Mammary epithelial cell (primary cell): ENCODE measurements at regions of chr9 and their contacts with region 1.

Region 1: GRCh38 chr9:27529316-27530278 is at the start of gene MOB3B:
- DNase-seq: peak; percentile 71
- H3K4me3 ChIP-seq: peak within 1 kb of the TSS; percentile 68 to 91 (median 71)
- H3K27ac ChIP-seq: peak within 1 kb of the TSS; percentile 98
- H3K4me1 ChIP-seq: peaks cover 31% of the 10 kb centered on the region
- H3K27me3 ChIP-seq: no peaks in the 10 kb centered on the region
- CTCF ChIP-seq: peak; percentile 52 to 86
- total RNA-seq, gene MOB3B: 18.8 to 19.3 TPM

Region 2: DNA sequence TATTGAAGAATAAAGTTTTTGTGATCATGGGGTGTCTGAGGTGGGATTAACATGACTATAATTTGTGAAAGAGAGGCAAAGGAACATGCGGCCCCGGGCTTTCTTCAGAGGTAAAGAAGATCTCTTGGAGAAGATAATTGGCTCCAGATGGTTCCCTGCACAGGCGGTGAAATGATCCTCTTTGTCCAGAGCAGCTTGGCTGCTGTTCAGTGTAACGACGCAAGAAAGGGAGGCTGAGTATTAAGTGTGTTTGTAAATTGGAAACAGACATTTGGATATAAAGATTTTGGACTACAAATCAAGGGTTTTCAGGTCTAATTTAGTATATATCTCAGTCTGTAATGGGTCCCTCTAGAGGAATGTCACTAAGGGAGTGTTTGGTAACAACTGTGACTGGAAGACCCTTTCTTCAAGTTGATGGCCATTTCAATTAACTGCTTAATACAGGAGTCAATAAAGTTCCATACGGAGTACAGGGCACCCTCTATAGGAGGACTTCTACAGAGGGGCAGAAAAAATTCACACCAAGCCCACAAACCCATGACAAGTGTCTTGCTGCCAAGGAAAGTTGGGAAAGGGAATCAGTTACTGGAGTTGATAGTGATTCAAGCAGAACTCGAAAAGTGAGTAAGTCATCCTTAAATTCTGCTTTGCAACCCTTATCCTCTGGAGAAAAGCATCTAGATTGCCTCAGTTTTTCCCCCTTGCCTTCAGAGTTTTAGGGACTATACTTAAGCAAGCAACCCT is 236.8 kb before region 1 on chr9:
- CTCF ChIA-PET with region 1: no interaction called
- dilution Hi-C with region 1: no loop called
- in situ Hi-C with region 1: no loop called
- intact Hi-C with region 1: no loop called
- DNase-seq: no peak
- H3K4me3 ChIP-seq: no peak overlapping the region
- H3K27ac ChIP-seq: no peak overlapping the region
- H3K4me1 ChIP-seq: no peaks in the 10 kb centered on the region
- H3K27me3 ChIP-seq: no peaks in the 10 kb centered on the region
- CTCF ChIP-seq: no peak

Region 3: GRCh38 chr9:27333241-27334052 is 196.2 kb before region 1 on chr9:
- CTCF ChIA-PET with region 1: interaction called, 7 read pairs
- dilution Hi-C with region 1: loop called (anchors 5 kb)
- in situ Hi-C with region 1: loop called in 1 of 2 experiments (anchors 5 kb)
- intact Hi-C with region 1: loop called (anchors 1 kb)
- DNase-seq: peak; percentile 62
- H3K4me3 ChIP-seq: no peak overlapping the region
- H3K27ac ChIP-seq: no peak overlapping the region
- H3K4me1 ChIP-seq: peaks cover 7% of the 10 kb centered on the region
- H3K27me3 ChIP-seq: no peaks in the 10 kb centered on the region
- CTCF ChIP-seq: peak; percentile 69 to 80

Region 4: DNA sequence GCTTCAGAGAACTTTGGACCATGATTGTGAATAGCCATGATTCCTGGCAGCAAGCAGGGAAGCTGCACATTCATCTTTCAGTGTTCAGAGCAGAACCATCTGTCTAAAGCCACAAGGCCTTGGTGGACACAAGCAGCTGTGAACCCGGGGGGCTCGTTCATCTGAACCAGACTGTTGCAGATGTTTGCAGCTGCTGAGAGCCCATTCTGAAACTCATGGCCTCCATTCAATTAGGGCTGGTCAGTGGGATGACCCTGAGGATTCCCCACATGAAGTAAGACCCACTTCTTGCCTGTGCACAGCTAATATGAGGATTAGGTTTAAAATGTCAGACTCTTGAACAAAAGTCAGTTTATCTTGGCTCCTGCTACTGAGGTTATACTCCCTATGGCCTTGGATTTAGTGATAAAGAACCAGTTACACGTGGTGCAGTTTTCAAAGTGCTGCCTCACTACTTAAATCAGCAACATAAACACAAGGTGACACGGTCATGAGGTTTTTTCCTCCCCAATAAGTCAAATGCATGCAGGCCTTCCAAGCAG is 115.3 kb before region 1 on chr9:
- CTCF ChIA-PET with region 1: no interaction called
- dilution Hi-C with region 1: no loop called
- in situ Hi-C with region 1: no loop called
- intact Hi-C with region 1: loop called (anchors 5 kb)
- DNase-seq: no peak
- H3K4me3 ChIP-seq: peak overlapping the region in 2 of 3 experiments; percentile 41 to 60
- H3K27ac ChIP-seq: peak overlapping the region; percentile 48
- H3K4me1 ChIP-seq: peaks cover 20% of the 10 kb centered on the region
- H3K27me3 ChIP-seq: no peaks in the 10 kb centered on the region
- CTCF ChIP-seq: no peak

Region 5: DNA sequence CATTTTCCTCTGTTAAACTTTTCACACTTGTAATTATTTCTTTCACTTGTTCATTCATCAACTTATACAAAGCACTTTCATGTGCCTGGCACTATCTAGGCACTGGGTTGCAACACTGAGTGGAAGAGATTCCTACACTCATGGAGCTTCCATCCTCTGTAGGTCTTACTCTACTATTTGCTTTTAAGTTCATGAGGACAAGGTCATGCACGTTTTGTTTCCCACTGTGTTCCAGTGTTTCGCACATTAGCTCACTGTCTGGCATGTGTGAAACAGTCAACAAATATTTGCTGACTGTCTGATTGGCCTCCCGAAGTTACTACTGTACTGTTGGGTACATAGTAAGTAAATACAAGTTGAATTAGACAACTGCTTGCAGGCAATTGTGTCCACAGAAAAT is 93.4 kb before region 1 on chr9:
- CTCF ChIA-PET with region 1: no interaction called
- dilution Hi-C with region 1: no loop called
- in situ Hi-C with region 1: loop called in 1 of 2 experiments (anchors 10 kb)
- intact Hi-C with region 1: no loop called
- DNase-seq: no peak
- H3K4me3 ChIP-seq: no peak overlapping the region
- H3K27ac ChIP-seq: no peak overlapping the region
- H3K4me1 ChIP-seq: peaks cover 32% of the 10 kb centered on the region
- H3K27me3 ChIP-seq: no peaks in the 10 kb centered on the region
- CTCF ChIP-seq: no peak

Region 6: GRCh38 chr9:27489087-27489876 is 40.3 kb before region 1 on chr9:
- CTCF ChIA-PET with region 1: no interaction called
- dilution Hi-C with region 1: no loop called
- in situ Hi-C with region 1: no loop called
- intact Hi-C with region 1: no loop called
- DNase-seq: no peak
- H3K4me3 ChIP-seq: no peak overlapping the region
- H3K27ac ChIP-seq: no peak overlapping the region
- H3K4me1 ChIP-seq: peaks cover 9% of the 10 kb centered on the region
- H3K27me3 ChIP-seq: no peaks in the 10 kb centered on the region
- CTCF ChIP-seq: no peak

Region 7: GRCh38 chr9:27499481-27499880 is 30.1 kb before region 1 on chr9:
- CTCF ChIA-PET with region 1: interaction called, 5 read pairs
- dilution Hi-C with region 1: no loop called
- in situ Hi-C with region 1: no loop called
- intact Hi-C with region 1: loop called (anchors 2 kb)
- DNase-seq: peak; percentile 91
- H3K4me3 ChIP-seq: peak overlapping the region in 2 of 3 experiments; percentile 15 to 23
- H3K27ac ChIP-seq: peak overlapping the region; percentile 86
- H3K4me1 ChIP-seq: peaks cover 48% of the 10 kb centered on the region
- H3K27me3 ChIP-seq: no peaks in the 10 kb centered on the region
- CTCF ChIP-seq: no peak

Region 8: GRCh38 chr9:27573634-27574590 is 44.3 kb after region 1 on chr9:
- CTCF ChIA-PET with region 1: no interaction called
- dilution Hi-C with region 1: no loop called
- in situ Hi-C with region 1: no loop called
- intact Hi-C with region 1: loop called (anchors 2 kb)
- DNase-seq: peak; percentile 99
- H3K4me3 ChIP-seq: peak overlapping the region; percentile 60 to 77 (median 76)
- H3K27ac ChIP-seq: peak overlapping the region; percentile 74
- H3K4me1 ChIP-seq: peaks cover 13% of the 10 kb centered on the region
- H3K27me3 ChIP-seq: no peaks in the 10 kb centered on the region
- CTCF ChIP-seq: no peak

Region 9: DNA sequence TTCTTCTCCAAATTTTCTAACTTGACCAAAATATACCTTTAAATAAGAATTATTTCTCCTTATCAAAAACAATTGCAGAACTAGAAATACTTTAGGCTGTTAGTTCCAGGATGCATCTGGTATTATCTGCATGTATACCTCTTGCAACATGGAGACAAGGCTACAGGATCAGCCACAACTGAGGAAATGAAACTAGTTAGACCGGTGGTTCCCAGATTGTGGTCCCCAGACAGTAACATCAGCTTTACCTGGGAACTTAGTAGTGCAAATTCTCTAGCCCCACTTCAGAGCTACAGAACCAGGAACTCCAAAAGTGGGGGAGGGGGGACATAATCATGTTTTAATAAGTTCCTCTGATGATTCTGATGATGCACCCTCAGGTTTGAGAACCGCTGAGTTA is 105.3 kb after region 1 on chr9:
- CTCF ChIA-PET with region 1: no interaction called
- dilution Hi-C with region 1: no loop called
- in situ Hi-C with region 1: no loop called
- intact Hi-C with region 1: no loop called
- DNase-seq: no peak
- H3K4me3 ChIP-seq: no peak overlapping the region
- H3K27ac ChIP-seq: no peak overlapping the region
- H3K4me1 ChIP-seq: peaks cover 4% of the 10 kb centered on the region
- H3K27me3 ChIP-seq: no peaks in the 10 kb centered on the region
- CTCF ChIP-seq: no peak